Activated CD4-positive, alpha-beta memory T cell treated with anti-CD3 and anti-CD28 coated beads for 36 hours (primary cell): ENCODE measurements at regions of chr1 and their contacts with region 1.

Region 1: DNA sequence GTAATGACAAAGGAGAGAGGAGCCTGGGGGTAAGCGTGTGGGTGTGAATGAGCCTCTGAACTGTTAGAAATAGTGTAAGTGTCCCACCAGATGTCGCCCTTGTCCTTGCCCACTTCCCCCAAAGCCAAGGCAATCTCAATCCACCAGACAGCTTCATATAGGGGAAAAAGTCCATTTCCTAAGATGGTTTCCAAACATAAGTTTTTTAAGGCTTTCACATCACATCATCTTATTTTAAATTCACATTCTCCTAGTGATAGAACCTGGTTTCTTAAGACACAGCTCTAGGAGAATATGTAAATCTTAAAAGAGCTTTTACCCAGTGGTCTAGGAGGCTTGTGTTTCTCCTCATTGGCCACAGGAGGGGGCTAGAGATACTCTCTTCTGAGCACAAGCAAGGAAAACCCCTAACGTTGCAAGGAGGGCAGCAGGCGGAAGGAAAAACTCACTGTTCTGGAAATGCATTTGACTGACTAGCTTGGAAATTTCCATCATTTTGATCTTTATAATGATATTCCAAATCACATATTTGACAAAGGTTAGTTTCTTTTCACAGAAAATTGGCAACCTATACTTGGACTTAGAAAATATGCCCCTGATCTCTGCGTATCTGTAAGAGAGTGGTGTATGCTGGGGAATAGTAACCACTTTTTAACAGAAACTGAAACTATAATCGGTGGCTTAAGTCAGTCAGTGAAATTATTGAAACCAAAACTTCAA is 51.9 kb upstream of the LPAR3 start:
- DNase-seq: peak; percentile 72
- H3K4me3 Mint-ChIP-seq: peak overlapping the region; percentile 75
- H3K27ac Mint-ChIP-seq: peak overlapping the region; percentile 90
- H3K4me1 Mint-ChIP-seq: peaks cover 26% of the 10 kb centered on the region
- H3K27me3 Mint-ChIP-seq: no peaks in the 10 kb centered on the region

Region 2: DNA sequence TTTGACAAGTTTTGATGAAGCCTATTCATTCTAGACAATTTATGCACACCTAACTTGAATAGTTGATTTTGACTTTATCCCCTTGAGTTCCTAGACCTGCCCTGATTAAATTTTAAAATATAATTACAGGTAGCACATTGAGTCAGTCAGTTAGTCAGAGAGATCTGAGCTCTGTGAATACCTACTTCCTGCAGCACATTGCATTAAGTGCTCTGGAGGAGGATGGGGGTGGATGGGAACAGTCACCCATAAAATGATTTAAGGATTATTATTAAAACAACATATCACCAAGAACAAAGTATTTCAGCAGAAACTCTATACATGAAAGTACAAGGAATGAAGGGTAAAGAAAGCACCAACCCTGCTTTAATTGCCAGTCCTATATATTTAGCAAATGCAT is 477.6 kb before region 1 on chr1:
- CTCF ChIA-PET with region 1: no interaction called
- POLR2A ChIA-PET with region 1: no interaction called
- intact Hi-C with region 1: no loop called
- DNase-seq: no peak
- H3K4me3 Mint-ChIP-seq: no peak overlapping the region
- H3K27ac Mint-ChIP-seq: no peak overlapping the region
- H3K4me1 Mint-ChIP-seq: no peaks in the 10 kb centered on the region
- H3K27me3 Mint-ChIP-seq: peaks cover 29% of the 10 kb centered on the region

Region 3: DNA sequence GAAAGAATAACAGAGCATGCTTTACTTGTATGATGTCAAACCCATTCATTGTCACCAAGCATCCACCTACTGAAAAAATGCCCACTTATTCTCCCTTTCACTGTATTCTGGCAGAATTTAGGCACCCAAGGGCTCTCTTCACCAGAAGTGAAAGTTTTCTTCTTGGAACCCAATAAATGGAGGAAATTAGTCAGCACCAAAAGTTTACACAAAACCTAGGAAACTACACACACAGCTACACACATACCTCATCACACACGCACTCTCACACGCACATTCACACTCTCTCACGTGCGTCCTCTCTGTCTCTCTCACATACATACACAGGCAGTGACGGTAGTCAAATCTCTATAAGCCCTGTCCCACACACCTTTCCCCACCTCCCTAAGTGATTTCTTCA is 14.4 kb after region 1 on chr1:
- CTCF ChIA-PET with region 1: interaction called, 50 read pairs
- POLR2A ChIA-PET with region 1: interaction called, 5 read pairs
- intact Hi-C with region 1: loop called (anchors 1 kb)
- DNase-seq: peak; percentile 81
- H3K4me3 Mint-ChIP-seq: no peak overlapping the region
- H3K27ac Mint-ChIP-seq: peak overlapping the region; percentile 72
- H3K4me1 Mint-ChIP-seq: peaks cover 32% of the 10 kb centered on the region
- H3K27me3 Mint-ChIP-seq: no peaks in the 10 kb centered on the region

Region 4: GRCh38 chr1:84996846-84997666 is 52.1 kb after region 1 on chr1 and contains the start of gene MCOLN2:
- CTCF ChIA-PET with region 1: interaction called, 44 read pairs
- POLR2A ChIA-PET with region 1: interaction called, 3 read pairs
- intact Hi-C with region 1: loop called (anchors 1 kb)
- DNase-seq: peak; percentile 68
- H3K4me3 Mint-ChIP-seq: peak within 1 kb of the TSS; percentile 77
- H3K27ac Mint-ChIP-seq: peak within 1 kb of the TSS; percentile 95
- H3K4me1 Mint-ChIP-seq: peaks cover 40% of the 10 kb centered on the region
- H3K27me3 Mint-ChIP-seq: peaks cover 12% of the 10 kb centered on the region
- total RNA-seq, gene MCOLN2: 42.1 to 43.2 TPM

Region 5: DNA sequence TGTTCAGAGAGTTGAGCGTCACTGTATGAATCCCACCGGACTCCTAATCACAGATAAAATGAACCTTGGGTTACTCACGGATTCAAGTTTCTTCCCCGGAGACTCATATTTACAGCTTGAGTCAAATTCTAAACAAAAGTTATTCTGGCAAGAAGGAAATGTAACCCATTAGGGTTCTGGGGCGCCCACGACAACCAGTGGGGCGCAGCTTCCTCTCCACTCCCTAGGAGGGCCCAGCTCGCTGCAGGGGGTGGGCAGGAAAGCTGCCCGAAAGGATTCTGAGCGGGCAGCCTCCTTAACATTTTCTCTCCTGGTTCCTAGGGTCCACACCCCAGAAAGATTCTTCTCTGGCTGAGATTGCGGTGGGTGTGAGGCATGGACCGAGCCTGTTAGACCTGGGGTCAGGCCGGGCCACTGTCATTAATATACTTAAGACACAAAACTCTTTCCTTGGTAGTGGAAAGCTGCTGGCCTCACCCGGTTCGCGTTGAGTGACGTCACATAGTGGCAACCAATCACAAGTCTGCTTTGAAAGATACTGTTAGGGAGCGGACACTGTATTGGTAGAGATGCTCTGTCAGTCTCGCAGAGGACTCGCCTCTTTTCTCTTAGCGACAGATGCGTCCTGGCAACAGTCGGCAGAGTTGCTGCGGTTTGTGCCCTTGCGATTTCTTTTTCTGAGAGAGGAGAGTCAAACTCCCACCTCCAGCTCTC is 116.9 kb after region 1 on chr1:
- CTCF ChIA-PET with region 1: interaction called, 18 read pairs
- POLR2A ChIA-PET with region 1: no interaction called
- intact Hi-C with region 1: no loop called
- DNase-seq: peak; percentile 89
- H3K4me3 Mint-ChIP-seq: peak overlapping the region; percentile 77
- H3K27ac Mint-ChIP-seq: peak overlapping the region; percentile 31
- H3K4me1 Mint-ChIP-seq: peaks cover 12% of the 10 kb centered on the region
- H3K27me3 Mint-ChIP-seq: peaks cover 13% of the 10 kb centered on the region

Region 6: GRCh38 chr1:85200870-85201339 is 256.0 kb after region 1 on chr1 and contains the start of gene SYDE2:
- CTCF ChIA-PET with region 1: interaction called, 7 read pairs
- POLR2A ChIA-PET with region 1: no interaction called
- intact Hi-C with region 1: loop called (anchors 1 kb)
- DNase-seq: peak; percentile 76
- H3K4me3 Mint-ChIP-seq: peak within 1 kb of the TSS; percentile 97
- H3K27ac Mint-ChIP-seq: peak within 1 kb of the TSS; percentile 89
- H3K4me1 Mint-ChIP-seq: peaks cover 26% of the 10 kb centered on the region
- H3K27me3 Mint-ChIP-seq: peaks cover 5% of the 10 kb centered on the region
- total RNA-seq, gene SYDE2: 2.7 to 2.8 TPM

Region 7: DNA sequence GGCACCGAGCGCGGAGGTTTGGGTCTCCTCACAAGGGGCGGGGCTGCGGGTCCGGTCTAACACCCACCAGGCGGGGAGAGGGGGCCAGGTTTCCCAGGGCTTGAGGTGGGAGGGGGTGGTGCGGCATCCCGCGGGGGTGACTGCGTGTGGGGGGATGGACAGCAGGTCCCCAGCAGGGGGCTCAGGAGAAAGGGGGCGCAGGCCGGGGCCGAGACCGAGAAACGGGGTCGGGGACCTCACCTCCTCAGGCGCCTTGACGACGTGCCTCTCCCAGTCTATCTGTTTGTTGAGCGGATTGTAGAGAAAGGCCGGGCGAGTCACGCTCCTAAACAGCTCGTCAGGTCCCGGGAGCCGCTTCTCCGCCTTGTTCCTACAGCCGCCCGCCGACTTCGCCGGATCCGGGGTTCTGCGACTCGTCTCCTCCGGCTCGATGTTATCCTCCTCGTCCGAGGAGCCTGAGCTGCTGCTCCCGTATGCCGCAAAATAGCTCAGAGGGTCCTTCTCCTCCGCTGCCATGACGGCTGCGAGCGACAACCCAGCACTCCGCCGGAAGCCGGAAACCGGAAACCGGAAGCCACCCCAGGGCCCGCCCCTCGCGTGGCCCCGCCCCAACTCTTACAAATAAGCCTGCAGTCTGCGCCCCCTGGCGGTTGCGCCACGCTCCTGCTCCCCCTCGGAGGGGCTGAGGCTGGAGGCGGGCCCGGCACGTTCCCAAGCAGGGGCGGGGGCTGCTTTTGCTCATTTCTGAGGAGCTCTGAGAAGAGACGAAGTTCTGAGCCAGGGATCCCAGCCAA is 314.4 kb after region 1 on chr1 and contains the start of gene C1orf52:
- CTCF ChIA-PET with region 1: interaction called, 229 read pairs
- POLR2A ChIA-PET with region 1: interaction called, 4 read pairs
- intact Hi-C with region 1: loop called (anchors 1 kb)
- DNase-seq: peak; percentile 97
- H3K4me3 Mint-ChIP-seq: peak within 1 kb of the TSS; percentile 97
- H3K27ac Mint-ChIP-seq: peak within 1 kb of the TSS; percentile 92
- H3K4me1 Mint-ChIP-seq: peaks cover 33% of the 10 kb centered on the region
- H3K27me3 Mint-ChIP-seq: no peaks in the 10 kb centered on the region
- total RNA-seq, gene C1orf52: 19.4 to 21.8 TPM

Region 8: DNA sequence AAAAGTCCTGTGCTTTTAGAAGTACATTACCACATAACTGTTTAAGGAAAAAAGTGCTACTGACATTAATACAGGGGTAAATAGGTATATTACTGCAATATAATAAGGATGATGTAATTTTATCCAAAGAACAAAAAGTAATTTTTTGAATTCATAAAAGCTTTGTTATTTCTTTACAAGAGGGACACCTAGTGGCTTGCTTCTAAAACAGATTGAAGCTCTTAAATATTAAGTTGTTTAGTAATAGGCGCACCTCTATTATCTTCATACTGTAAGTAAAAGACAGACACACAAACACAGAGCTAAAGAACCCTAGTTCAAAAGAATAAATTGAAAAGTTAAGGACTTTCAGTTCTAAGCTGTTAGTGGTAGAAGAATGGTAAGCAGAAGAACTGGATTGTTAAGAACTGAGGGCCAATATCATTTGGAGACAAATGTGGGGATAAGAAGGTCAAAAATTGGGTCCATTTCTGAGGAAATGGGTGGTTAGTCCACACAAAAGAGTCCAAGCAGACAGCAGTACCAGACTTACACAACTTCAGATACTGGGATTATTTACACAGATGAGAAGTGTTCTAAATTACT is 747.9 kb after region 1 on chr1:
- CTCF ChIA-PET with region 1: no interaction called
- POLR2A ChIA-PET with region 1: no interaction called
- intact Hi-C with region 1: loop called (anchors 2 kb)
- DNase-seq: no peak
- H3K4me3 Mint-ChIP-seq: no peak overlapping the region
- H3K27ac Mint-ChIP-seq: no peak overlapping the region
- H3K4me1 Mint-ChIP-seq: peaks cover 4% of the 10 kb centered on the region
- H3K27me3 Mint-ChIP-seq: no peaks in the 10 kb centered on the region